ENCODE measurements at regions of chr9 and their contacts with region 1.

Region 1: DNA sequence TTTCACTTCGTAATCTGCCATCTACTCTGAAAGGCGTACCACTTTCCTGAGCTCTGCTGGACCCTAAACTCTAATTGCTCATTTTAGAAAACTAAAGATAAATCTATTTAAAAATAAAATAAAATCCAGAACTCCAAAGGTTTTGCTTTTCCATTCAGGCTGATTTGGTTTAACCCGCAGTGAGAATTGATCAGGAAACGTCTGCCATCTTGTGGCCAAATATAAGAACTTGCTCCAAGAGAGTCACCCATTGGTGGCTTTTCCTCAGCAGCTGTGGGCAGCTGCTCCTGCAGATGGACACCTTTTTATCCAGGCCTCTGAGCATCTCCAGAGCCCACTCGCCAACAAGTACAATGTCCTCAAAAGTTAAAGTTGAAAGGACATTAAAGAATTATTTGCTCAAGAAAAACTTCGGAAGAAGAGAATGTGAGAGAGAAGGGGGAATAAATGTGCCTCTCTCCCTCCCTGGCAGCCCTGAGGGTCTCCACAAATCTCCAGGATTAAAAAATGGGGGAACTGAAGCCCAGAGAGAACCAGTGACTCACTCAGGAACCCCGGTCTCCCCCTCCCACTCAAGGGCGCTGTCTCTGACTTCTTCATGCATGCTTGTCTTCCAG is 4.1 kb downstream of the SAXO1 start:
- DNase-seq: peak; percentile 41 to 90
- H3K4me3 ChIP-seq: no peak overlapping the region
- H3K27ac ChIP-seq: no peak overlapping the region
- H3K4me1 ChIP-seq: peaks cover 0 to 12% (median 0%) of the 10 kb centered on the region in 4 donors
- H3K27me3 ChIP-seq: peaks cover 0 to 3% (median 0%) of the 10 kb centered on the region in 3 donors
- CTCF ChIP-seq: peak in 5 of 7 experiments; percentile 51 to 72 (median 68)
- EP300 ChIP-seq: no peak
- POLR2A ChIP-seq: no peak

Region 2: GRCh38 chr9:18250053-18250452 is 778.9 kb before region 1 on chr9:
- intact Hi-C with region 1: loop called (anchors 5 kb)
- DNase-seq: no peak
- H3K4me3 ChIP-seq: no peak overlapping the region
- H3K27ac ChIP-seq: no peak overlapping the region
- H3K4me1 ChIP-seq: peaks cover 0 to 3% (median 0%) of the 10 kb centered on the region in 4 donors
- H3K27me3 ChIP-seq: no peaks in the 10 kb centered on the region
- CTCF ChIP-seq: no peak
- EP300 ChIP-seq: no peak
- POLR2A ChIP-seq: no peak

Region 3: GRCh38 chr9:19085295-19085694 is 56.4 kb after region 1 on chr9:
- intact Hi-C with region 1: no loop called
- DNase-seq: peak in 1 of 2 donors; percentile 26
- H3K4me3 ChIP-seq: no peak overlapping the region
- H3K27ac ChIP-seq: no peak overlapping the region
- H3K4me1 ChIP-seq: no peaks in the 10 kb centered on the region
- H3K27me3 ChIP-seq: no peaks in the 10 kb centered on the region
- CTCF ChIP-seq: peak in 3 of 7 experiments; percentile 28 to 41 (median 38)
- EP300 ChIP-seq: no peak
- POLR2A ChIP-seq: no peak

Region 4: GRCh38 chr9:19184144-19184917 is 155.4 kb after region 1 on chr9:
- intact Hi-C with region 1: no loop called
- DNase-seq: peak; percentile 72 to 90
- H3K4me3 ChIP-seq: no peak overlapping the region
- H3K27ac ChIP-seq: peak overlapping the region; percentile 82 to 95 (median 90)
- H3K4me1 ChIP-seq: peaks cover 30 to 59% (median 39%) of the 10 kb centered on the region in 4 donors
- H3K27me3 ChIP-seq: no peaks in the 10 kb centered on the region
- CTCF ChIP-seq: no peak
- EP300 ChIP-seq: no peak
- POLR2A ChIP-seq: no peak